Activated CD4-positive, alpha-beta T cell treated with anti-CD3 and anti-CD28 coated beads for 36 hours (primary cell): ENCODE measurements at regions of chr22 and their contacts with region 1.

Region 1: DNA sequence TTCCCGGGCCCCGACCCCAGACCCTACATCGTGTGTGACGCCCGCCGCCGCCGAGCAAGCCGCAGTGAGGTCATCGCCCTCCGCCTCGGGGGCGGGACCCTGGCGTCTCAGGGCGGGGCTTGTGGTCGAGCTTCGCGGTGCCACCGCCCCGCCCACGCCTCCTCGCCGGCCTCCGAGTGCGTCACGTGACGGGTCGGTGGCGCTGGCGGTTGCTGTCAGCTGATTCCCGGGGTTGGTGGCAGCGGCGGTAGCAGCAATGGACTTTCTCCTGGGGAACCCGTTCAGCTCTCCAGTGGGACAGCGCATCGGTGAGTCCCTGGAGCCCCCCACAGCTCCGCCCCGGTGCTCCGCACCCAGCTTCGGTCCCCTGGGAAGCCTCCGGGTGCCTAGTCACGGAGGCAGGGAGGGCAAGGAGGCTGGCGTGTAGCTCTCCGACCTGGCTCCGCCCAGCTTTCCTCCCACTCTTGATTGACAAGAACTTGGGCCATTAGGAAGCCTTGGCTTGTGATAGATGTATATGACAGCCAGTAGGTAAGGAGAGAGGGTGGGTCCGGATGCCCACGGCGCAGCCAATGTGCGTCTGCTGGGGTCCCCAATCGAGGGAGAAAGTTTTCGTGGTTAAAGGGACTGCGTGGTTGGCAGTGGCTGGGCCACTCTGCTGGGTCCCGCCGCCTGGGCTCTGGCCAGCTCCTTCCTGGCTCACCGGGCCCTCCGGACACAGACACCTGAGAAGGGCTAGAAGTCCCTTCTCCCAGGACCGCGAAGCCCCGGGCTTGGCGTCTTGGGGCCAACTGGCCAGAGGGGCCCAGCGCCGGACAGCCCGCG is at the start of gene TOM1:
- DNase-seq: peak; percentile 97
- ATAC-seq: peak; percentile 97
- H3K4me3 Mint-ChIP-seq: peak within 1 kb of the TSS; percentile 83
- H3K27ac Mint-ChIP-seq: peak within 1 kb of the TSS; percentile 84
- H3K4me1 Mint-ChIP-seq: peaks cover 35% of the 10 kb centered on the region
- H3K27me3 Mint-ChIP-seq: no peaks in the 10 kb centered on the region
- total RNA-seq, gene TOM1: 23.7 to 29.5 TPM

Region 2: DNA sequence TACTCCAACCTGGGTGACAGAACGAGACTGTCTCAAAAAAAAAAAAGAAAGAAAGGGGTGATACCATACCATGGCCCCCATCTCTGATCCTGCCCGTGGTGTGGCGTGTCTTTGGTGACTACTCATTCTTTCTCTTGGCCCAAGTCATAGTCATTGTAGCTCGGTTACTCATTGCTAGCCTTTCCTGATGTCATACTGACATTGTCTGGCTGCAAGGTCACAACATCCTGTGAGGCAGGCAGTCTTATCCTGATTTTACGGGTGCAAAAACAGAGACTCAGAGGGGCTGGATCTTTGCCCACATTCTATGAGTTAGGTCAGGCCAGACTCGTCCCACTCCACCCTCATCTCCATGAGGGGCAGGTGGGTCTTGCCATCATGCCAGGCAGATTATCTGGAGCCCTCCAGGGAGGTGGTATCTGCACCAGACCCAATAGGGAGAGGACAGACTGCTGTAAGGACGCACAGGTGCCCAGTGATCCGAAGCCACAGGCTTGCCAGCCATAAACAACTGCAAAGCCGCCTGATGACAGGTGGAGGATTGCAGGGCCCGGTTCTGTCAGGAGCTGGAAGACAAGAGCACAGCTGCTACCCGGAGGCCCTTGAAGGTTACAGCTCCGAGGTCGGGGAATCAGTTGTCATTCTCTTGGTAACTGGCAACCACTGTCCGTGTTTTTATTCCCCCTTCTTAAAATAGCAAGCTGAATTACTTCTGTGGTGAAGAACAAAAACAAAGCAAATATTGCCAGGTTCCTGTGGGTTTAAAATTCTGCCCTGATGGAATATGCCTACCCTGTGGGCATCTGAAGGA is 13.6 kb after region 1 on chr22:
- CTCF ChIA-PET with region 1: interaction called, 6 read pairs
- POLR2A ChIA-PET with region 1: interaction called, 8 read pairs
- intact Hi-C with region 1: loop called in 1 of 2 experiments (anchors 1 kb)
- DNase-seq: peak; percentile 65
- ATAC-seq: peak; percentile 86
- H3K4me3 Mint-ChIP-seq: no peak overlapping the region
- H3K27ac Mint-ChIP-seq: peak overlapping the region; percentile 74
- H3K4me1 Mint-ChIP-seq: peaks cover 66% of the 10 kb centered on the region
- H3K27me3 Mint-ChIP-seq: no peaks in the 10 kb centered on the region

Region 3: GRCh38 chr22:35350539-35351503 is 50.9 kb after region 1 on chr22:
- CTCF ChIA-PET with region 1: interaction called, 3 read pairs
- POLR2A ChIA-PET with region 1: no interaction called
- intact Hi-C with region 1: loop called in 1 of 2 experiments (anchors 1 kb)
- DNase-seq: peak; percentile 93
- ATAC-seq: peak; percentile 90
- H3K4me3 Mint-ChIP-seq: peak overlapping the region; percentile 72
- H3K27ac Mint-ChIP-seq: peak overlapping the region; percentile 55
- H3K4me1 Mint-ChIP-seq: peaks cover 28% of the 10 kb centered on the region
- H3K27me3 Mint-ChIP-seq: peaks cover 6% of the 10 kb centered on the region

Region 4: DNA sequence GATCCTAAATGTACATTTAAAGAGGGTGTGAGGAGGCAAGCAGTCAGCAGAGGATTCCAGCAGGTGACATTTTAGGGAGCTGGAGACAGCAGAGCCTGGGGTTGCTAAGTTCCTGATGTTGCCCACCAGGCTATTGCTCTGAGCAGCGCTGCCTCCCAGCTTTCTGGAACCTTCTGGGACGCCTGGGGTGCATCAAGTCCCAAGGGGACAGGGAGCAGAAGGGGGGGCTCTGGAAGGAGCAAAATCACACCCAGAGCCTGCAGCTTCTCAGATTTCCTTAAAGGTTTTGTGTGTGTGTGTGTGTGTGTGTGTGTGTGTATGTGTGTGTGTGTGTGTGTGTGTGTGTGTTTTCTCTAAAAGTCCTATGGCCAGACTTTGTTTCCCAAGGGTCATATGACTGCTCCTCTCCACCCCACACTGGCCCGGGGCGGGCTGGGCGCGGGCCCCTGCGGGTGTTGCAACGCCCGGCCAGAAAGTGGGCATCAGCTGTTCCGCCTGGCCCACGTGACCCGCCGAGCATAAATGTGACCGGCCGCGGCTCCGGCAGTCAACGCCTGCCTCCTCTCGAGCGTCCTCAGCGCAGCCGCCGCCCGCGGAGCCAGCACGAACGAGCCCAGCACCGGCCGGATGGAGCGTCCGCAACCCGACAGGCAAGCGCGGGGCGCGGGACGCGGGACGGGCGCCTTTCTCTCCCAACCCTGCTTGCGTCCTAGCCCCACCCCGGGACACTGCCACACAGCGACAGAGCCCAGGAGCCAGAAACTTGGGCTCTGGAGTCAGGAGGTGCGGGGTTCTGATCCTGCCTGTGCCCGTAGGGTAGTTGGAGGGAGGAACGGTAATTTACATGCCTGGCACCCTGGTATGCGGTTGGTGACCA is 80.9 kb after region 1 on chr22 and contains the start of gene HMOX1:
- CTCF ChIA-PET with region 1: no interaction called
- POLR2A ChIA-PET with region 1: no interaction called
- intact Hi-C with region 1: no loop called
- DNase-seq: peak; percentile 73
- ATAC-seq: peak; percentile 86
- H3K4me3 Mint-ChIP-seq: peak within 1 kb of the TSS; percentile 35
- H3K27ac Mint-ChIP-seq: no peak within 1 kb of the TSS
- H3K4me1 Mint-ChIP-seq: peaks cover 18% of the 10 kb centered on the region
- H3K27me3 Mint-ChIP-seq: peaks cover 30% of the 10 kb centered on the region
- total RNA-seq, gene HMOX1: 0.30 to 0.61 TPM

Region 5: DNA sequence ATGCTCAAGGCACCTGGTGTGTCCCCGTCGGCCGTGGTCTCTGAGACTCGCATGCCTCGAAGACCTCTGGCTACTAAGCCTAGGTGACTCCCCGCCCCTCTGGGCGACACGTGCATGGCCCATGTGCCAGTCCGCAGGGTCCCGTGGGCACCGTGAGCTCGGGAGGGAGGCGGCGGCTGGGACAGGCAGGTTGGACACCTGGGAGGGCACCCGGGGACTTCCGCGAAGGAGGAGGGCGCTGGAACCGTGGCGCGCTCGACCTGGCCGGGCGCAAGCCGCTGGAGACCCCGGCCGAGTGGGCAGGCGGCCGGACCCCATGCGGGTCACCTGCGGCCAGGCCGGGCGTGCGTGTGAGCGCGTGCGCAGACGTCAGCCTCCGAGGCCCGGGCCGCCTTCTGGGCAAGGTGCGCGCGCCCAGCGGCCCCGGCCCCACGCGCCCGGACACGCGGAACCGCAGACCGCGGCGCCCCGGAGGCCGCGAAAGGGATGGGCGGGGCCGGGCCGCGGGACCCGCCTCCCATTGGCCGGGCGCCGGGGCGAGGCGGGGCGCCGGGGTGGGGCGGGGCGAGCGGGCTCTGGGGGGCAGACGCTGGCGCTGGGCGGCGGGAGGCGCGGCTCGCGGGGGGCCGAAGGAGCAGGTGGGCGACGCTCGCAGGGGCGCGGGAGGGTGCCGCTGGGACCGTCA is 240.2 kb after region 1 on chr22:
- CTCF ChIA-PET with region 1: no interaction called
- POLR2A ChIA-PET with region 1: no interaction called
- intact Hi-C with region 1: loop called in 1 of 2 experiments (anchors 1 kb)
- DNase-seq: peak; percentile 75
- ATAC-seq: peak; percentile 85
- H3K4me3 Mint-ChIP-seq: peak overlapping the region; percentile 62
- H3K27ac Mint-ChIP-seq: no peak overlapping the region
- H3K4me1 Mint-ChIP-seq: peaks cover 3% of the 10 kb centered on the region
- H3K27me3 Mint-ChIP-seq: peaks cover 31% of the 10 kb centered on the region

Region 6: DNA sequence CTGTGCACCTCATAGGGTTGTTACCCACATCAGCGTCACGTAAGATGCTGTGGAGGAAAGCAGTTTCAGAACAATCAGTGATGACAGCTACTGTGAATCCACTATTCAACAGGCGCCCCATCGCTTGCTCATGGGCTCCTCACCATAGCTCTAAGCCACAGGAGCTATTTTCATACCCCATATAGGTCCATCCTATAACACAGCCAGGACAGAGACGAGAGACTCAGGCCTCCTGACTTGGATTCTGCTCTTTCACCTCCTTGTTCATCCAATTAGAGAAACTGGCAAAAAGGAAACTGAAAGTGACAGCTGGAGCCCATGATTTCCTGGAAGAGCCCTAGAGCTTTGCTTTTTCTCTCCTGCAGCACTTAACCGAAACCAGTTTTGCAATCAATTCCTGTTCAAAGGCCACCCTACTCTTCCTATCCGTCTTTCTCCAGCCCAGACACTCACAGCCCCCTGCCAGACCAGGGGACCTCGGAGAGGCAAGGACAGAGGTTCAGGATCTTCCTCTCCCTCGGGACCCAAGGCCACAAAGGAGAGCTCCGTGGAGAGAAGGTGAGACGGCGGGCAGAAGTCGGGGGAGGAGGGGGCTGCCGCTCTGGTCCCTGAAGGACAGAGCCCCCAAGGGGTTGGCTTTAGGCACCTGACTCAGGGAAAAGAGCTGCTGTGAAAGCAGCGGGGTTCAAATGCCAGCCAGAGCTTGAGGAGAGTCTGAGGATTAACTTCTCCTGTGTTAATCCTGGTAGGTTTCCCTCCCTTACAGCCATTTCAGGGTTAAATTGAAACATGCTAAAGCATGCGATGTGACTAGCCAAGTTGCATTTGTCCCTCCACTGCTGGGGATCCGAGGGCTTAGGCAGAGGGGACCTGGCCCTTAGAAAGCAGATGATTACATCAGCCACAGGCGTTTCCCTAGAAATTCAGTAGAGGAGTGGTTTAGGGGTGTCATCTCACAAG is 348.5 kb after region 1 on chr22 and contains the start of gene APOL6:
- CTCF ChIA-PET with region 1: no interaction called
- POLR2A ChIA-PET with region 1: no interaction called
- intact Hi-C with region 1: loop called in 1 of 2 experiments (anchors 2 kb)
- DNase-seq: peak; percentile 74
- ATAC-seq: peak; percentile 79
- H3K4me3 Mint-ChIP-seq: peak within 1 kb of the TSS; percentile 90
- H3K27ac Mint-ChIP-seq: peak within 1 kb of the TSS; percentile 100
- H3K4me1 Mint-ChIP-seq: peaks cover 36% of the 10 kb centered on the region
- H3K27me3 Mint-ChIP-seq: no peaks in the 10 kb centered on the region
- total RNA-seq, gene APOL6: 34.3 to 35.5 TPM

Region 7: GRCh38 chr22:35739076-35739930 is 439.4 kb after region 1 on chr22:
- CTCF ChIA-PET with region 1: no interaction called
- POLR2A ChIA-PET with region 1: no interaction called
- intact Hi-C with region 1: no loop called
- DNase-seq: peak; percentile 16
- ATAC-seq: no peak
- H3K4me3 Mint-ChIP-seq: no peak overlapping the region
- H3K27ac Mint-ChIP-seq: no peak overlapping the region
- H3K4me1 Mint-ChIP-seq: no peaks in the 10 kb centered on the region
- H3K27me3 Mint-ChIP-seq: no peaks in the 10 kb centered on the region

Region 8: DNA sequence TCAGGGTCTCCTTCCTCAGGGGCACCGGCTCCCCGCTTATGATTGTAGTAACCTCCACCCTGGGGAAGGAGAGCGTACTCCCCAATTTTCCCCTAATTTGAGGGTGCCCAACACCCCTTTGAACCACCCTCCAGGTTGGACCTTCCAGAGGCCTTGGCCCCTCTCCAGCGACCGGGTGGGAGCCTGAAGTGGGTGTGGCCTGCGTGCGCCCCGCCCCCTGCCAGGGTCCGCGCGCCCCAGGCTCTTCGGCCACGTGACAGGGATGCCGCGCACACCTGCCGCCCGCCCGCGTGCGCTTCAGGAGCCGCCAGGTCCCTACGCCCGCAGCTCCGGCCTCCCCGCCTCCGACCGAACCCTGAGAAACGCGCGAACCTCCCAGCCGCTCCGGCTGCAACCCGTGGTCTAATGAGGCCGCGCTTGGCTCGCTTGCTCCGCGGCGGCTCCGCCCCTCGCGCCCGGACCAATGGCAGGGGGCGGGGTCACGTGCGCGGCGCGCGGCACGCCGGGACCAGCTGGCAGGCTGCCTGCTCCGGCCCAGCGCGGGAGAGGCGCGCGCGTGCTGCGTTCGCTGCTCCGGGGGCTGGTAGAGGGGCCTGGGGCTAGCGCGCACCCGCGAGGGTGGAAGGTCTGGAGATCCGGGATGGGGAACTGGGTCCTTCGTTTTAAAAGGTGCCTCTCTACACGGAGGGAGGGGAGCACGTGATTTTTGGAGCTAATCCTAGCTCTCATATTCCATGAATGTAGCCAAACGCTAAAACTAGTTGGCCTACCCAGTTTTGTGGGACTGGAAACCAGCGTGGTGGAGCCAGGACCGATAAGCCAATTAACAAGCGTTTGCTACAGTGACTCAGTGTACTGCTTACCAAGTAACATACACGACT is 1207.0 kb after region 1 on chr22 and contains the start of gene FOXRED2:
- CTCF ChIA-PET with region 1: no interaction called
- POLR2A ChIA-PET with region 1: no interaction called
- intact Hi-C with region 1: loop called in 1 of 2 experiments (anchors 10 kb)
- DNase-seq: peak; percentile 94
- ATAC-seq: peak; percentile 95
- H3K4me3 Mint-ChIP-seq: peak within 1 kb of the TSS; percentile 49
- H3K27ac Mint-ChIP-seq: peak within 1 kb of the TSS; percentile 58
- H3K4me1 Mint-ChIP-seq: peaks cover 13% of the 10 kb centered on the region
- H3K27me3 Mint-ChIP-seq: no peaks in the 10 kb centered on the region
- total RNA-seq, gene FOXRED2: 15.7 to 16.6 TPM